ENCODE measurements at regions of chr16 and their contacts with region 1.

Region 1: GRCh38 chr16:84084570-84085270 is 32.0 kb downstream of the MBTPS1 start:
- DNase-seq: peak; percentile 81
- ATAC-seq: peak; percentile 98
- H3K4me3 Mint-ChIP-seq: no peak overlapping the region
- H3K27ac Mint-ChIP-seq: no peak overlapping the region
- H3K4me1 Mint-ChIP-seq: no peaks in the 10 kb centered on the region
- H3K27me3 Mint-ChIP-seq: no peaks in the 10 kb centered on the region
- CTCF ChIP-seq: peak; percentile 73

Region 2: GRCh38 chr16:84032458-84033178 is 52.1 kb before region 1 on chr16:
- CTCF ChIA-PET with region 1: no interaction called
- POLR2A ChIA-PET with region 1: no interaction called
- DNase-seq: no peak
- ATAC-seq: peak; percentile 41
- H3K4me3 Mint-ChIP-seq: no peak overlapping the region
- H3K27ac Mint-ChIP-seq: no peak overlapping the region
- H3K4me1 Mint-ChIP-seq: 0 out of 2 replicates have a peak, but pooled peaks cover 3% of the 10 kb centered on the region
- H3K27me3 Mint-ChIP-seq: peaks cover 4% of the 10 kb centered on the region; the same call in 1 of the 2 replicates
- CTCF ChIP-seq: no peak

Region 3: DNA sequence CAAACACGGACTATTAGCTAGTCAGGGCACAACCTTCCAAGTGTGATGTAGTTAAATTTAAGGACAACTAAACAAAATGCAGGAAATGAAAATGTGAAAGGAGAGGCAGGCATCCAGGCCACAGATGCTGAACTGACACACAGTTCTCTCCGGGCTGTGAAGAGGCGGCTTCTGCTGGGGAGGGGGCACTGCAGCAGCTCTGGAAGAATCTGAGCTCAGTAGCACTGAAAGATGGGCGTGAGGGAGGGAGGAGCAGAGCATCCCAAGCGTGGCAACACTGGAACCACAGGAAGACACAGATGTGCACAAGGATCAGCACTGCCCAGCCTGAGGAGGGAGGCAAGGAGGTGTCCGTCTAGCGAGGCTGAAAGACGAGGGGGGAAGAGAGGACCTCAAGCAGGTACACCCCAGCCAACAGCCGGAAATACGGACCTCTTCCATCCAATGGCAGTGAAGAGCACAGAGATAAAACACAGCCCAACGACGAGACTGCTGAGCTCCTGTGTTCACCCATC is 20.6 kb after region 1 on chr16:
- CTCF ChIA-PET with region 1: interaction called, 19 read pairs
- POLR2A ChIA-PET with region 1: no interaction called
- DNase-seq: no peak
- ATAC-seq: no peak
- H3K4me3 Mint-ChIP-seq: no peak overlapping the region
- H3K27ac Mint-ChIP-seq: peak overlapping the region; percentile 34
- H3K4me1 Mint-ChIP-seq: peaks cover 22% of the 10 kb centered on the region
- H3K27me3 Mint-ChIP-seq: no peaks in the 10 kb centered on the region
- CTCF ChIP-seq: no peak

Region 4: DNA sequence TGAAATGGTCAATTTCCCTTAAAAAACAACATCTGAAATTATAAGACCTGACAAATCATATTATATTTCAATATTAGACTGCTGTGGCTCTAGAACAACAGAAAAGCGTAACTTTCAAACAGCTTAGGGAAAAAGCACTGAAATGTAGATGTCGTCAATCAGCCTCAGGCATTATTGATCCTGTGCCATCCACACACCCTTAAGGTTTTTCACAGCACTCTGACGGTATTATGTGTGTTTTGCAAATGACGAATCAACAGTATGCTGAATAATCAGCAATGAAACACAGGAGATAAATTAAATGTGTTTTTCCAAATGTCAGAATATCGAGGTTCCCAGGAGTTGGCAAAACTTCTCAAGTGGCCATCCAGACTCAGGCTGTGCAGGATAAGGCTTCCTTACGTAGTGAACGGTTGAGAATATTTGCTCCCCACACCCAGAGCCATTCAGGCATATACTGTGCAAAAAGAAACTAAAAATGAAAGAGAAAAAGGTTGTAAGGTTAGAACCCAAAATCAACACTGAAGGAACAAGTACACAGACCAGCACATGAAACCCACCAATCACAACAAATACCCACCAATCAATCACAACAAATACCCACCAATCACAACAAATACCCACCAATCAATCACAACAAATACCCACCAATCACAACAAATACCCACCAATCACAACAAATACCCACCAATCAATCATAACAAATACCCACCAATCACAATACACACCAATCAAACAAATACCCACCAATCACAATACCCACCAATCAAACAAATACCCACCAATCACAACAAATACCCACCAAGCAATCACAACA is 39.7 kb after region 1 on chr16:
- CTCF ChIA-PET with region 1: no interaction called
- POLR2A ChIA-PET with region 1: no interaction called
- DNase-seq: no peak
- ATAC-seq: no peak
- H3K4me3 Mint-ChIP-seq: no peak overlapping the region
- H3K27ac Mint-ChIP-seq: no peak overlapping the region
- H3K4me1 Mint-ChIP-seq: no peaks in the 10 kb centered on the region
- H3K27me3 Mint-ChIP-seq: no peaks in the 10 kb centered on the region
- CTCF ChIP-seq: no peak

Region 5: GRCh38 chr16:84166796-84167695 is 82.3 kb after region 1 on chr16:
- CTCF ChIA-PET with region 1: interaction called, 10 read pairs
- POLR2A ChIA-PET with region 1: no interaction called
- DNase-seq: no peak
- ATAC-seq: peak; percentile 89
- H3K4me3 Mint-ChIP-seq: no peak overlapping the region
- H3K27ac Mint-ChIP-seq: no peak overlapping the region
- H3K4me1 Mint-ChIP-seq: no peaks in the 10 kb centered on the region
- H3K27me3 Mint-ChIP-seq: no peaks in the 10 kb centered on the region; the same call in 1 of the 2 replicates
- CTCF ChIP-seq: no peak

Region 6: GRCh38 chr16:84194470-84195200 is 109.9 kb after region 1 on chr16:
- CTCF ChIA-PET with region 1: no interaction called
- POLR2A ChIA-PET with region 1: no interaction called
- DNase-seq: no peak
- ATAC-seq: no peak
- H3K4me3 Mint-ChIP-seq: no peak overlapping the region
- H3K27ac Mint-ChIP-seq: no peak overlapping the region
- H3K4me1 Mint-ChIP-seq: 0 out of 2 replicates have a peak, but pooled peaks cover 3% of the 10 kb centered on the region
- H3K27me3 Mint-ChIP-seq: no peaks in the 10 kb centered on the region; the same call in 1 of the 2 replicates
- CTCF ChIP-seq: no peak